ENCODE measurements at regions of chr3 and their contacts with region 1.

Region 1: GRCh38 chr3:9932843-9933560 is 632 bp upstream of the CRELD1 start:
- DNase-seq: peak; percentile 93
- ATAC-seq: peak; percentile 68
- H3K4me3 ChIP-seq: peak overlapping the region in 4 of 5 experiments; percentile 54 to 95 (median 71)
- H3K4me3 Mint-ChIP-seq: peak overlapping the region; percentile 94
- H3K27ac ChIP-seq: peak overlapping the region; percentile 82 to 94
- H3K27ac Mint-ChIP-seq: peak overlapping the region; percentile 98
- H3K4me1 ChIP-seq: peaks cover 22 to 26% of the 10 kb centered on the region in 2 donors
- H3K4me1 Mint-ChIP-seq: peaks cover 39% of the 10 kb centered on the region
- H3K27me3 ChIP-seq: no peaks in the 10 kb centered on the region
- H3K27me3 Mint-ChIP-seq: no peaks in the 10 kb centered on the region
- CTCF ChIP-seq: peak; percentile 85

Region 2: DNA sequence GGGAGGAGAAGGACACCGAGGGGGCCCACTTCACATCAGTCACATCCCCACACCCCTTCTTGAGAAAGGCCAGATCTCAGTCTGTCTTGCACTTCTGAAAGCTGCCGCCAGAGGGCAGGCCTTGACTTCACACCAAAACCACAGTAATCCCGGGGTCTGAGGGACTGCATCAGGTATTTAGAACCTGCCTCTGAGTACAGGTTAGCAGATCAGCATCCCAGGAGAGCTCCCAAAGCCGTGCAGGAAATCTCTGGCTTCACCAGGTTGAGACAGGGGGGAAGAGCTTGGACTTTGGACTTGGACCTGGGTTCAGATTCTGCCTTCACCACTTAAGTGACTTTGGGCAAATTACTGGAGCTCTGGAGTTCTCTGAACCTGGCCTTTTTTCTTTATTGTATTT is 429.7 kb before region 1 on chr3:
- CTCF ChIA-PET with region 1: interaction called, 4 read pairs
- POLR2A ChIA-PET with region 1: no interaction called
- intact Hi-C with region 1: loop called (anchors 5 kb)
- DNase-seq: peak; percentile 80
- ATAC-seq: peak; percentile 71
- H3K4me3 ChIP-seq: no peak overlapping the region
- H3K4me3 Mint-ChIP-seq: no peak overlapping the region
- H3K27ac ChIP-seq: no peak overlapping the region
- H3K27ac Mint-ChIP-seq: no peak overlapping the region
- H3K4me1 ChIP-seq: peaks cover 23 to 27% of the 10 kb centered on the region in 2 donors
- H3K4me1 Mint-ChIP-seq: peaks cover 24% of the 10 kb centered on the region
- H3K27me3 ChIP-seq: peaks cover 0 to 47% (median 26%) of the 10 kb centered on the region in 4 experiments
- H3K27me3 Mint-ChIP-seq: peaks cover 41% of the 10 kb centered on the region
- CTCF ChIP-seq: peak; percentile 85

Region 3: GRCh38 chr3:9843715-9844438 is 89.1 kb before region 1 on chr3 and contains the start of gene RPUSD3:
- CTCF ChIA-PET with region 1: interaction called, 4 read pairs
- POLR2A ChIA-PET with region 1: no interaction called
- intact Hi-C with region 1: loop called (anchors 5 kb)
- DNase-seq: peak; percentile 97
- ATAC-seq: peak; percentile 100
- H3K4me3 ChIP-seq: peak within 1 kb of the TSS; percentile 60 to 96 (median 73)
- H3K4me3 Mint-ChIP-seq: peak within 1 kb of the TSS; percentile 98
- H3K27ac ChIP-seq: peak within 1 kb of the TSS; percentile 17 to 75
- H3K27ac Mint-ChIP-seq: peak within 1 kb of the TSS; percentile 92
- H3K4me1 ChIP-seq: peaks cover 8 to 17% of the 10 kb centered on the region in 2 donors
- H3K4me1 Mint-ChIP-seq: peaks cover 20% of the 10 kb centered on the region
- H3K27me3 ChIP-seq: no peaks in the 10 kb centered on the region
- H3K27me3 Mint-ChIP-seq: no peaks in the 10 kb centered on the region
- CTCF ChIP-seq: no peak
- total RNA-seq, gene RPUSD3: 60.7 and 62.1 TPM in 2 replicates

Region 4: DNA sequence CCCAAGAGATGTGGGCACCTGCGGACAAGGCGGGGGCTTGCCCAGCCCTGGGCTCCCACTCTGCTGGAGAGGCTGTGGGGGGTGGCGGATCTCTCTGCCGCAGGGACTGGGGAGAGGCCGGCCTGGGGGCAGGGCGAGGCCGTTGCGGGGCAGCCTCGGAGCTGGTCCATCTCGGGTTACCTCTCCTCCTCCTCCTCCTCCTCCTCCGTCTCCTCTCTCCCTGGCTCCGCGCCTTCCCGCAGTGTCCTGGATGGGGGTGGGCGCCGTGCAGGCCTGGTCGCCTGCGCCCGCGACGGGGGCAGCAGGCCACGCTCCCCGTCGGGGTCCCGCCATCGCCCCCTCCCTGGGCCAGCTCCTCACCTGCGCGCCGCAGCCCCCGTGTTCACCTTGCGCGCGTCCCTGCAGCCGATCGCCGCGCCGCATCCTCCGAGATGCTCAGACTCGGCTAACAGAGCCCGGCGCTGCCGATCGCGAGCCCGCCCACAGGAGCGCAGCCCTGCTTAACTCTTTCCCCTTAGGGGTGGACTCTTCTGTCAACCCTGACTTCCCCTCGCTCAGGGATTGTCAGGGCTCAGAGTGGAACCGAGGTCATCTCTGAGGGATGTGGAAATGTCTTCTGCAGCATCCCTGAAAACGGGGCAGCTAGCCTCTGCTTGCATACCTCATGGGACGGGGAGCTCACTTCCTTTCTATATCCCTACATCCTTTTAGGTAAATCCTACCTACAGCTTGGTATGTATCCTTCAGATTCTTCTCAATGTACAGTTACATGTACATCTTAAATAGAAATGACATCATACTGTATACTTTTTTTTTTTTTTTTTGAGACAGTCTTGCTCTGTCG is 19.2 kb after region 1 on chr3 and contains the start of gene PRRT3:
- CTCF ChIA-PET with region 1: interaction called, 47 read pairs
- POLR2A ChIA-PET with region 1: interaction called, 11 read pairs
- intact Hi-C with region 1: no loop called
- DNase-seq: peak; percentile 62
- ATAC-seq: peak; percentile 89
- H3K4me3 ChIP-seq: peak within 1 kb of the TSS in 4 of 5 experiments; percentile 39 to 69 (median 58)
- H3K4me3 Mint-ChIP-seq: peak within 1 kb of the TSS; percentile 91
- H3K27ac ChIP-seq: no peak within 1 kb of the TSS
- H3K27ac Mint-ChIP-seq: peak within 1 kb of the TSS; percentile 50
- H3K4me1 ChIP-seq: peaks cover 15 to 18% of the 10 kb centered on the region in 2 donors
- H3K4me1 Mint-ChIP-seq: peaks cover 15% of the 10 kb centered on the region
- H3K27me3 ChIP-seq: peaks cover 0 to 12% (median 0%) of the 10 kb centered on the region in 4 experiments
- H3K27me3 Mint-ChIP-seq: no peaks in the 10 kb centered on the region
- CTCF ChIP-seq: no peak
- total RNA-seq, gene PRRT3: 3.9 and 4.4 TPM in 2 replicates

Region 5: DNA sequence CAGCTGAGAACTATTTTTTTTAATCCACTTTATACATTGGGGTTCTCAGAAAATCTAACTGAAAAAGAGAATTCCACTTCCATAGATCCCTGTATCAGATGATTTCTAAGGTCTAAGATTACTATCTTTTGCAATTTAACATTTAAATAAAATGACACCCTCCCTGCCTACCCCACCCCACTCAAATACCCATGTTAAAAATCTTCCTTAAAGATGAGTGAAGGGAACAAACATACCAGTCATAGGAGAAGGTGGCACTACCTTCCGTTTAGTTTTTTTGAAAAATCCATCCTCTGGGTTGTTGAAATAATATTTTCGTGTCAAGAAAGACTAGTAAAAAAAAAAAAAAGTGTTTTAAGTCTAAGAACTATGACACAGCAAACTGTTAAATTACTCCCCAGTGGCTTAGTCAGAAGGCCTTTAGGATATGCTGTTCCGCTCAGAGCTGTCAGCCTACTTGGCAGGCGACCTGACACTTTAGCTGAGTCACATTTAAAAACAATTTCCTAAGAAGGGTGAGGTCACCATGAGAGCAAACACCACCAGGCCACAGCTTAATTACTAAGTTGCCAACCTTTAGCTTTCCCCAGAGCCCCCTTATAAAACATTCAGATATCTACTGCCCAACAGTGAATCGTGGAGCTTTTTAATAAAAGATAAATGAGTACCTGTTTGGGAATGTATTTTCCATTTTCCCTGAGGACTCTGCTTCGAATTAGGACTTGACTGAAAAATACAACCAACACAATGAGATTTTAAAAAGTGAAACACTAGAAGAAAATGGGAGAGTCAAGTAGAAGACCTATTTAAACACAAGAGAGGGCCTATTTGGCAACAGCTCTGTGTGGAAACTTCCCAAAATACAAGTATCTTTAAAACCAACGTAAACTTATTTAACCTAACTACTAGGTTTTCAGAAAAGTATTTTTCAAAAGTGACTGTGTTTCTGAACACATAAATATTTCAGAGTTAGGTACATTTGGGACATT is 44.0 kb after region 1 on chr3:
- CTCF ChIA-PET with region 1: no interaction called
- POLR2A ChIA-PET with region 1: no interaction called
- intact Hi-C with region 1: no loop called
- DNase-seq: no peak
- ATAC-seq: no peak
- H3K4me3 ChIP-seq: no peak overlapping the region
- H3K4me3 Mint-ChIP-seq: no peak overlapping the region
- H3K27ac ChIP-seq: no peak overlapping the region
- H3K27ac Mint-ChIP-seq: no peak overlapping the region
- H3K4me1 ChIP-seq: no peaks in the 10 kb centered on the region
- H3K4me1 Mint-ChIP-seq: peaks cover 5% of the 10 kb centered on the region
- H3K27me3 ChIP-seq: no peaks in the 10 kb centered on the region
- H3K27me3 Mint-ChIP-seq: no peaks in the 10 kb centered on the region
- CTCF ChIP-seq: no peak

Region 6: GRCh38 chr3:10115326-10116137 is 182.5 kb after region 1 on chr3 and contains the start of gene BRK1:
- CTCF ChIA-PET with region 1: interaction called, 3 read pairs
- POLR2A ChIA-PET with region 1: interaction called, 3 read pairs
- intact Hi-C with region 1: loop called (anchors 1 kb)
- DNase-seq: peak; percentile 98
- ATAC-seq: peak; percentile 96
- H3K4me3 ChIP-seq: peak within 1 kb of the TSS; percentile 61 to 96 (median 84)
- H3K4me3 Mint-ChIP-seq: peak within 1 kb of the TSS; percentile 94
- H3K27ac ChIP-seq: peak within 1 kb of the TSS; percentile 48 to 85
- H3K27ac Mint-ChIP-seq: peak within 1 kb of the TSS; percentile 97
- H3K4me1 ChIP-seq: peaks cover 16 to 27% of the 10 kb centered on the region in 2 donors
- H3K4me1 Mint-ChIP-seq: peaks cover 34% of the 10 kb centered on the region
- H3K27me3 ChIP-seq: no peaks in the 10 kb centered on the region
- H3K27me3 Mint-ChIP-seq: no peaks in the 10 kb centered on the region
- CTCF ChIP-seq: no peak
- total RNA-seq, gene BRK1: 82.8 and 86.3 TPM in 2 replicates

Region 7: GRCh38 chr3:10154839-10155344 is 221.9 kb after region 1 on chr3:
- CTCF ChIA-PET with region 1: no interaction called
- POLR2A ChIA-PET with region 1: no interaction called
- intact Hi-C with region 1: no loop called
- DNase-seq: no peak
- ATAC-seq: no peak
- H3K4me3 ChIP-seq: no peak overlapping the region
- H3K4me3 Mint-ChIP-seq: no peak overlapping the region
- H3K27ac ChIP-seq: no peak overlapping the region
- H3K27ac Mint-ChIP-seq: no peak overlapping the region
- H3K4me1 ChIP-seq: peaks cover 0 to 1% of the 10 kb centered on the region in 2 donors
- H3K4me1 Mint-ChIP-seq: peaks cover 2% of the 10 kb centered on the region
- H3K27me3 ChIP-seq: no peaks in the 10 kb centered on the region
- H3K27me3 Mint-ChIP-seq: no peaks in the 10 kb centered on the region
- CTCF ChIP-seq: no peak

Region 8: GRCh38 chr3:10322352-10322710 is 389.3 kb after region 1 on chr3:
- CTCF ChIA-PET with region 1: interaction called, 14 read pairs
- POLR2A ChIA-PET with region 1: no interaction called
- intact Hi-C with region 1: loop called (anchors 2 kb)
- DNase-seq: peak; percentile 55
- ATAC-seq: no peak
- H3K4me3 ChIP-seq: no peak overlapping the region
- H3K4me3 Mint-ChIP-seq: peak overlapping the region; percentile 26
- H3K27ac ChIP-seq: no peak overlapping the region
- H3K27ac Mint-ChIP-seq: peak overlapping the region; percentile 70
- H3K4me1 ChIP-seq: peaks cover 11 to 21% of the 10 kb centered on the region in 2 donors
- H3K4me1 Mint-ChIP-seq: peaks cover 26% of the 10 kb centered on the region
- H3K27me3 ChIP-seq: peaks cover 0 to 2% (median 0%) of the 10 kb centered on the region in 4 experiments
- H3K27me3 Mint-ChIP-seq: peaks cover 8% of the 10 kb centered on the region
- CTCF ChIP-seq: peak; percentile 56

Measured in B cell (primary cell).